Psoas muscle (tissue), 8 donors: ENCODE measurements at regions of chr1 and their contacts with region 1.

Region 1: DNA sequence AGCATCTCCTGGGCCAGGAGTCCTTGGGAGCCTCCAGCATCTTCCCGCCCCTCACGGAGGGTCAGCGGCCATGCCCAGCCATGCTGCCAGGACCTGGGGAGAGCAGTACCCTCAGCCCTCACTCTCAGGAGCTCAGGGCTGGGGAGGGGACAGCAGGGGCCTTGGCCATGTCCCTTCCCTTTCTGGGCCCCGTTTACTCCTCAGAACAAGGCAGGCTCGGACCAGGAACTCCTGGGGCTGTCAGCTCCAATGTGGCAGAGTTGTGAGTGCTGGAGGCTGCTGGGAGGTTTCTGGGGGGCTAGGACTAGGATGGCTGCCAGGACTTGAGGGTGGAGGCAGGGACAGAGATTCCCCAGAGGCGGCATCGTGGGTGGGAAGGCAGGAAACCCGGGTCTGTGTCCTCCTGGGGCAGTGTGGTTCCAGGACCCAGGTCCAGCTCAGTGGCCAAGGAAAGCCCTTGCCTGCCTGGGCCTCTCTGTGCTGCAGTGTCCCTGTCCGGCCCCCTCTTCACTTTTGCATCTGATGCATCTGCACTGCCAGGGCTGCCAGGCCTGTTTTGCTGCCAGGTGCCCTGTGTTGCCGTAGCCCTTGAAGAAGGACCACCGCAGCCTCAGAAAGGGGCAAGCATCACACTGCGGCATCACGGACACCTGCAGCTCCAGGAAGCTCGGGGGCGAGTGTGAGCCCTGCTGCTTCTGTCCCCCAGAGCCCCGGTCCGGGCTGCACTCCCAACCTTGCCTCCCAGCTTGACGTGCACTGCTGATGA is 223.9 kb downstream of the CAMTA1 start:
- DNase-seq: no peak
- ATAC-seq: no peak
- H3K4me3 ChIP-seq: no peak overlapping the region
- H3K27ac ChIP-seq: no peak overlapping the region
- H3K4me1 ChIP-seq: peaks cover 3% of the 10 kb centered on the region
- H3K27me3 ChIP-seq: no peaks in the 10 kb centered on the region
- CTCF ChIP-seq: no peak

Region 2: GRCh38 chr1:6880951-6881690 is 128.0 kb before region 1 on chr1:
- intact Hi-C with region 1: no loop called
- DNase-seq: no peak
- ATAC-seq: no peak
- H3K4me3 ChIP-seq: no peak overlapping the region
- H3K27ac ChIP-seq: no peak overlapping the region
- H3K4me1 ChIP-seq: no peaks in the 10 kb centered on the region
- H3K27me3 ChIP-seq: no peaks in the 10 kb centered on the region
- CTCF ChIP-seq: no peak

Region 3: GRCh38 chr1:6922096-6922931 is 86.8 kb before region 1 on chr1:
- intact Hi-C with region 1: loop called in 1 of 2 experiments (anchors 5 kb)
- DNase-seq: peak in 1 of 2 donors; percentile 31
- ATAC-seq: peak; percentile 72 to 85 (median 78)
- H3K4me3 ChIP-seq: no peak overlapping the region
- H3K27ac ChIP-seq: no peak overlapping the region
- H3K4me1 ChIP-seq: peaks cover 17% of the 10 kb centered on the region
- H3K27me3 ChIP-seq: no peaks in the 10 kb centered on the region
- CTCF ChIP-seq: no peak